ENCODE measurements at regions of chr6 and their contacts with region 1.

Region 1: DNA sequence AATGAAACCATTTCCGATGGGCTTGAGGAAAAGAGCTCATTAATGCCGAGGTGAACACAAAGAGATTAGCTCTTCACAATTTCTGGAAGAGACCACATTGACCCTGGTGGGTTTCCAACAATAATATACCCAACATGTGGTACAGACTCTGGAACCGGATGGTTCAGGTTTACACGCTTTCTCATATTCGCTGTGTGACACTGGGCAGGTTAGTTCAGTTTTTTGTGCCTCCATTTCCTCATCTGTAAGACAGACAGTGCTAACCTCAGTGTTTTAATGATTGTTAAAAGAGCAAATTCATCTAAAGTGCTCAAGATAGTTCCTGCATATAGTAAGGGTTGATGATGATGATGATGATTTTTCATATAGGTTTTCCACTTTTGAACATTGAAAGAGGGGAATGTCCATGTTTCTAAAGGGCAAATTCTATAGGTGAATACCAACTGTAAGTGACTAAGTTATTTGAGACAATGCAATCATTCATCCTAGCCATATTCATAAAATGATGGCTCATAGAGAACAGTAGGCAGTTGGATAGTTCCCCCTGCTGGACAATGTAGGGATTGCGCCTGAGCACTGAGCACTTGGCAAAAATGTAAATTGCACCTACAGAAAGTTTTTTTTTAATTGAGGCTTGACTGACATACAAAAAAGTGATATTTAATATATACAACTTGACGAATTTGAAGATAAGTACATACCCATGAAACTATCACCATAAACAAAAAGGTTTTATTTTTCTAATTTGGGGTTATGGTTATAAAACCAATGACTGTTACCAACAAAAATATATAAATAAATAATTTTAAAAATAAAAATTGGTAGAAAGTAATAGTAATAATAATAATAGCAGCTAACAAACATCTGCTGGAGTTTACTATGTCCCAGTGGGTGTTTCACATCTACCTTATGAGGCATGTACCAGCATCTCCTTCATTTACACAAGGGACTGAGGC is 2.1 kb upstream of the PERP start:
- DNase-seq: peak; percentile 93
- H3K4me3 Mint-ChIP-seq: no peak overlapping the region
- H3K27ac Mint-ChIP-seq: no peak overlapping the region
- H3K4me1 Mint-ChIP-seq: peaks cover 19% of the 10 kb centered on the region
- H3K27me3 Mint-ChIP-seq: peaks cover 30% of the 10 kb centered on the region

Region 2: DNA sequence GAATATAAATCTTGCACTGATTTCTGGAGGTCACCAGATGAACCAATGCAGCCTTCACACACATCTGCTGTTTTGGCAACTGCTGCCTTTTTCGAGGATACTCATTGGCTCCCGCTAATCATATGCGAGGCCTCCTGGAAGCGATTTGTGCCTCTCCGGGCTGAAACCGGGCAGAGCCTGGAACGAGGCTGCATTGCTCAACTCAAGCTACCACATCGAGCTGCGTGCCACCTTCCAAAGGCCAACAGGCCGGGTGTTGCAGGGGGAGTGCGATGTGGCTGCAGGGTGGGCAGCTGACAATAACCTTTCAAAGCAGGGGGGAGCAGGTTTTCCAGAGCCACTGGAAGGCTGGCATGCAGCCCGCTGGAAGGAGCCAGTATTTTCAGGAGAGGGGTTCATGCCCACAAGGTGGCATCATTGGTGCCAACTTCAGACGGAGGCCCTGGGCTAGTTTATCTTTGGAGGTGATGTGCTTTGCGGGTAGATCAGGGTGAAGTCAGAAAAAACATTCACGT is 767.6 kb before region 1 on chr6:
- CTCF ChIA-PET with region 1: no interaction called
- intact Hi-C with region 1: loop called (anchors 10 kb)
- DNase-seq: peak; percentile 69
- H3K4me3 Mint-ChIP-seq: peak overlapping the region; percentile 12
- H3K27ac Mint-ChIP-seq: no peak overlapping the region
- H3K4me1 Mint-ChIP-seq: peaks cover 7% of the 10 kb centered on the region
- H3K27me3 Mint-ChIP-seq: no peaks in the 10 kb centered on the region

Region 3: DNA sequence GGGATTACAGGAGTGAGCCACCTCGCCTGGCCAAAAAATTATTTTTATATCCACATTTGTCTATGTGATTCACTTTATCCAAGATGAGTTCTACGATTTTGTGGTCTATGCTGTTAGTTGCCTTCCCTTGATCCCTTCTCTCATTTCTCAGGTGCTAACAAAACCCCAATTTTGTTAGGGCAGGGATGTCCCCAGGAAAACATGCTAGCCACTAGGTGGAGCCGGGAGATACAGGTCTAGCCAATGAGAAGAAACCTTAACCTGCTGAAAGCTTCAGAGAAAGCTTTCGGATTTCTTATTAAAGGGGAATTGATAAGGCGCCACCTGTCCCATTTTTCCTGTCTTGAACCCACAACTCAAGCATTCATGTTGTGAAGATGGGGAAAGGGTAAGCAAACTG is 447.7 kb before region 1 on chr6:
- CTCF ChIA-PET with region 1: no interaction called
- intact Hi-C with region 1: loop called (anchors 5 kb)
- DNase-seq: peak; percentile 71
- H3K4me3 Mint-ChIP-seq: no peak overlapping the region
- H3K27ac Mint-ChIP-seq: no peak overlapping the region
- H3K4me1 Mint-ChIP-seq: peaks cover 19% of the 10 kb centered on the region
- H3K27me3 Mint-ChIP-seq: peaks cover 4% of the 10 kb centered on the region

Region 4: GRCh38 chr6:137791281-137792159 is 317.8 kb before region 1 on chr6:
- CTCF ChIA-PET with region 1: no interaction called
- intact Hi-C with region 1: loop called (anchors 2 kb)
- DNase-seq: no peak
- H3K4me3 Mint-ChIP-seq: no peak overlapping the region
- H3K27ac Mint-ChIP-seq: peak overlapping the region; percentile 5
- H3K4me1 Mint-ChIP-seq: peaks cover 51% of the 10 kb centered on the region
- H3K27me3 Mint-ChIP-seq: no peaks in the 10 kb centered on the region

Region 5: DNA sequence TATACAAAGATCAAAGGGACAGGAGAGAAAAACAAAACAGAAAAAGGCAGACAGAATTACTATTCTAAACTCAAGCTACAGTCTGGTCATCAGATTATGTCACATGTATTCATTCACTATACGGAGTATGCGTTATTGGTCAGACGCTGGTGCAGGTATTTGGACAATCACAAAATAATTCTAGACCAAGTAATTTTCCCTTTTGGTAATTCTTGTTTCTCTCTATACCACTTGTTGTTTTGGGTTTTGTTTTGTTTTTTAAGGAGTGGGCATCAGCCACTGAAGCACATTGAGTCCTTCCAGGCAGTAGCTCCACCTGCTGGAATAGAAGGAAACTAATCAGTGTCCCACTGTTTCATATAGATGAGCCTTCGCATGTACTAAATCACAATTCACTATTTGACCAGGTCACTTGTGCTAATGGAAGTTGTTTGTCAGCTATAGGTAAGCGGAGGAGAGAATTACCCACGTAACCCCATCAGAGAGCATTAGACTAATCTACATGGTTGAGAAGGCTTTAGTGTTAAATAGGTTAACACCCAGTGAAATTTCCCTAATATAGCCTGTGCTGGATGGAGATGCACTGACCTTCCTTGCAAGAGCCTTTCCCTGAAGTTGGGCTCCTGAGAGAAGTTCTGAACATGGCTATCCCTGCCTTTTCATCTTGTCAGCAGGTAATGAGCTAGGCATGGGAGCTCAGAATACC is 164.4 kb before region 1 on chr6:
- CTCF ChIA-PET with region 1: no interaction called
- intact Hi-C with region 1: loop called (anchors 1 kb)
- DNase-seq: peak; percentile 46
- H3K4me3 Mint-ChIP-seq: no peak overlapping the region
- H3K27ac Mint-ChIP-seq: peak overlapping the region; percentile 0
- H3K4me1 Mint-ChIP-seq: peaks cover 56% of the 10 kb centered on the region
- H3K27me3 Mint-ChIP-seq: no peaks in the 10 kb centered on the region

Region 6: DNA sequence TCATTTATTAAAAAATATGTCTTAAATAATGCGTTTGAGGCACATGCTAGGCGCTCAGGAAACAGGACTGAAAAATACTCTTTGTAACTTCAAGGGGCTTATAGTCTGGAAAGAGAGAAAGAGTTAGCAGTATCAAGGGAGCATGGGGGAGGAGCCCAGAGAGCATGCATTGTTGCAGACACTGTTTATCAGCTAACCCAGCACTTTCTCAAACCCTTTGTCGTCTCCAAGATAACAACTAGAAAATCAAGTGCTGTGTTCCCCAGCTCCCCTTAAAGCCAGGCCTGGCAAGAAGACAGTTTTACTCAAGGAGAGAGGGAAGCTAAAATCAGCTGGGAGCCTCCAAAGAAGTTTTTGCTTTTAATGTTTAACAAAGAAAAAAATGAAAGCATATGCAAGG is 100.5 kb before region 1 on chr6:
- CTCF ChIA-PET with region 1: interaction called, 26 read pairs
- intact Hi-C with region 1: loop called (anchors 1 kb)
- DNase-seq: no peak
- H3K4me3 Mint-ChIP-seq: no peak overlapping the region
- H3K27ac Mint-ChIP-seq: no peak overlapping the region
- H3K4me1 Mint-ChIP-seq: peaks cover 20% of the 10 kb centered on the region
- H3K27me3 Mint-ChIP-seq: no peaks in the 10 kb centered on the region

Measured in activated naive CD4-positive, alpha-beta T cell treated with anti-CD3 and anti-CD28 coated beads for 36 hours (primary cell).